ENCODE measurements at regions of chr6 and their contacts with region 1.

Region 1: GRCh38 chr6:35727935-35728682 is 8.7 kb upstream of the ARMC12 start:
- DNase-seq: peak; percentile 92 to 98
- H3K4me3 ChIP-seq: peak overlapping the region; percentile 24
- CTCF ChIP-seq: no peak
- POLR2A ChIP-seq: no peak

Region 2: GRCh38 chr6:35603326-35604202 is 124.5 kb before region 1 on chr6:
- intact Hi-C with region 1: loop called (anchors 1 kb)
- DNase-seq: no peak
- H3K4me3 ChIP-seq: no peak overlapping the region
- CTCF ChIP-seq: no peak
- POLR2A ChIP-seq: no peak

Region 3: GRCh38 chr6:35688581-35689322 is 39.4 kb before region 1 on chr6 and contains the start of gene FKBP5:
- intact Hi-C with region 1: loop called (anchors 2 kb)
- DNase-seq: peak; percentile 96 to 99
- H3K4me3 ChIP-seq: peak within 1 kb of the TSS; percentile 98
- CTCF ChIP-seq: no peak
- POLR2A ChIP-seq: peak in 1 of 2 donors; percentile 72
- total RNA-seq, gene FKBP5: 166 to 278 (median 238) TPM

Region 4: DNA sequence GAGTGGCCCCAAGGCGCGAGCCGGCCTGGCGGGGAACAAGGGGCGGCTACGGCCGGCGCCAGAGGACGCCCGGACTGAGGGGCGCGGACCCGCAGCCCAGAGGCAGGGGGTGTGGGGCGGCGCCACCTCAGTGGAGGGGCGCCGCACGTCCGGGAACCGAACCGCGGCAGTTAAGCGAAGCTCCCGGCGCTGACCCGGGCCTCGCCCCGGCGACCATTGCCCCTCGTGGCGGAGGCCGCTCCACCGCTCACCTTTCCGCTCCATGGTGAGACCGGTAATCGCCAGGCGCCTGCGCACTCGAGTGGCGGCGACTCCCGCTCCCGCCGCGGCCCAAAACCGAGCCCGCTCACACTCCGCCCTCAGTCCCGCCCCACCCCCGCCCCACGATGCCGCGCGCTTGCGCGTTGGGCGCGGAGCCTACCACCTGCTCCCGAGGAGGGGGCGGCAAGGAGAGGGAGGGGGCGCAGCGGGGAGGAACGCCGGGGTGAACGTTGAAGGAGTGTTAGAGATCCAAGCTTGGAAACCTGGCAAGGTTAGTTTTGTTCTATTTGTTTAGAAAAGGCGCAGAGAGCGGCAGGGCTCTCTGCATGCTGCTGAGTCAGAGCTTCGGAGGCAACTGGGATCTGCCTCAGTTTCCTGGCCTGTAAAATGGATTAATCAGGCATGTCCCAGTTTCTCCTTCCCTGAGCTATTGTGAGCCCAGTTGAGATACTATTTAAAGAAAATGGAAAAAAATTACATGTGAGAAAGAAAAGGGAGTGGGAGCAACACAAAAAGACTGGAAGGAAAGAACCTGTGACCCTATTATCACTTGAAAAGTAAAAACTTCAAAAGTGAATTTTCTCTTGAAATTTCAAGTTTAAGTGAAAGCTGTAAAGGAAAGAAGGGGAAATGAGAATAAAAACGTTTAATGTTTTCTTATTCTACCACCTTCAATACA is 193.0 kb after region 1 on chr6 and contains the start of gene SRPK1:
- intact Hi-C with region 1: no loop called
- DNase-seq: peak; percentile 69 to 96
- H3K4me3 ChIP-seq: peak within 1 kb of the TSS; percentile 56
- CTCF ChIP-seq: no peak
- POLR2A ChIP-seq: no peak
- total RNA-seq, gene SRPK1: 98.3 to 145 (median 111) TPM